Activated CD4-positive, alpha-beta T cell treated with anti-CD3 and anti-CD28 coated beads, Interleukin-2, amount 10 ng/mL, durations not matched to agents 24 days and 14 days (primary cell): ENCODE measurements at regions of chr1 and their contacts with region 1.

Region 1: GRCh38 chr1:153220606-153221303 is 3.4 kb downstream of the PRR9 start:
- DNase-seq: no peak
- H3K4me3 Mint-ChIP-seq: no peak overlapping the region
- H3K27ac Mint-ChIP-seq: no peak overlapping the region
- H3K4me1 Mint-ChIP-seq: peaks cover 7% of the 10 kb centered on the region
- H3K27me3 Mint-ChIP-seq: peaks cover 14% of the 10 kb centered on the region

Region 2: GRCh38 chr1:152440635-152441471 is 779.9 kb before region 1 on chr1:
- intact Hi-C with region 1: no loop called
- DNase-seq: peak; percentile 89
- H3K4me3 Mint-ChIP-seq: no peak overlapping the region
- H3K27ac Mint-ChIP-seq: no peak overlapping the region
- H3K4me1 Mint-ChIP-seq: no peaks in the 10 kb centered on the region
- H3K27me3 Mint-ChIP-seq: peaks cover 22% of the 10 kb centered on the region

Region 3: DNA sequence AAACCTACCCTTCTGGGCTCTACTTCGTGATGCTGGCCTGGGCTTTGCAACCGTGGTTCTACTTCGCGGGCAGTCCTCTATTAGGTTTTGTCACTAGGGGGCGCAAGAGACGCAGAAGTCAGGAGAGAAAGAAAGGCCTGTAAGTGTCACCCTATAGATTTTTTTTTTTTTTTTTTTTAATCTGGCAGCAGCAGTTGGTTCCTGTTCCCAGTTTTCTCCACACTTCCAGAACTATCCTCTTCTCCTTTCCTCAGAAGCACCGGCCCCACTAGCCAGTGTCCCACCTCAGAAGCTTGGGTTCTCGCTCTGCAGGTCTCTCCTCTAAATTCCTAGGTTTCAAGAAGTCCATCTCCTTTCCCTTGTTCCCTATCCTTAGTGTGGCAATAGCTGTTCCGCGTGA is 566.6 kb before region 1 on chr1:
- intact Hi-C with region 1: loop called (anchors 2 kb)
- DNase-seq: peak; percentile 87
- H3K4me3 Mint-ChIP-seq: no peak overlapping the region
- H3K27ac Mint-ChIP-seq: no peak overlapping the region
- H3K4me1 Mint-ChIP-seq: no peaks in the 10 kb centered on the region
- H3K27me3 Mint-ChIP-seq: peaks cover 18% of the 10 kb centered on the region

Region 4: GRCh38 chr1:152869808-152870419 is 350.8 kb before region 1 on chr1:
- intact Hi-C with region 1: loop called (anchors 1 kb)
- DNase-seq: peak; percentile 88
- H3K4me3 Mint-ChIP-seq: no peak overlapping the region
- H3K27ac Mint-ChIP-seq: no peak overlapping the region
- H3K4me1 Mint-ChIP-seq: no peaks in the 10 kb centered on the region
- H3K27me3 Mint-ChIP-seq: no peaks in the 10 kb centered on the region

Region 5: GRCh38 chr1:153141377-153141776 is 79.4 kb before region 1 on chr1:
- intact Hi-C with region 1: no loop called
- DNase-seq: no peak
- H3K4me3 Mint-ChIP-seq: no peak overlapping the region
- H3K27ac Mint-ChIP-seq: no peak overlapping the region
- H3K4me1 Mint-ChIP-seq: no peaks in the 10 kb centered on the region
- H3K27me3 Mint-ChIP-seq: peaks cover 38% of the 10 kb centered on the region

Region 6: DNA sequence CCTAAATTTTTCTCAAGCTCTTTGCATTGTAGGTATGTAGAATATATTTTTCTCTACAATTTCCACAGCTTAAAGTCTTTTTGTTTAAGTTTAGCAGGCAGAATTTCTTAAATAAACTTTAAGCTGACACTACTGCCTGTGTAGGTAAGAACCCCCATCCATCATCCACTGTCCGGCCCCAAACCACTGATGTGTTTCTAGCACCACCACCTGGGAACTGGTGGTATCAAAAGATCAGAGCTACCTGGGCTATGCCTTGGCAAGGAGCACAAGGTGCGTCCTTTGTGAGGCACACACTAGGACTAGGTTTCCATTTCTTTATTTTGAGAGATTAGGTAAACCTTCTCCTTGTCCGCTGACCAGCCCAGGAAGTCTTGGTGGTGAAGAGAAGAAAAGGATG is 28.1 kb before region 1 on chr1:
- intact Hi-C with region 1: no loop called
- DNase-seq: no peak
- H3K4me3 Mint-ChIP-seq: no peak overlapping the region
- H3K27ac Mint-ChIP-seq: no peak overlapping the region
- H3K4me1 Mint-ChIP-seq: no peaks in the 10 kb centered on the region
- H3K27me3 Mint-ChIP-seq: peaks cover 19% of the 10 kb centered on the region